ENCODE measurements at regions of chr9 and their contacts with region 1.

Region 1: GRCh38 chr9:93962561-93963440 is 7.6 kb upstream of the BARX1 start:
- DNase-seq: peak; percentile 87 to 90
- ATAC-seq: peak; percentile 90
- H3K4me3 ChIP-seq: no peak overlapping the region
- H3K27ac ChIP-seq: no peak overlapping the region
- H3K4me1 ChIP-seq: no peaks in the 10 kb centered on the region
- H3K27me3 ChIP-seq: no peaks in the 10 kb centered on the region

Region 2: GRCh38 chr9:93682232-93682968 is 280.4 kb before region 1 on chr9:
- intact Hi-C with region 1: loop called (anchors 2 kb)
- DNase-seq: peak; percentile 63 to 86
- ATAC-seq: no peak
- H3K4me3 ChIP-seq: no peak overlapping the region
- H3K27ac ChIP-seq: no peak overlapping the region
- H3K4me1 ChIP-seq: no peaks in the 10 kb centered on the region
- H3K27me3 ChIP-seq: no peaks in the 10 kb centered on the region

Region 3: GRCh38 chr9:93827545-93828330 is 135.1 kb before region 1 on chr9:
- intact Hi-C with region 1: loop called (anchors 5 to 10 kb)
- DNase-seq: peak; percentile 70 to 82
- ATAC-seq: peak; percentile 84
- H3K4me3 ChIP-seq: peak overlapping the region in 1 of 2 donors; percentile 18
- H3K27ac ChIP-seq: no peak overlapping the region
- H3K4me1 ChIP-seq: no peaks in the 10 kb centered on the region
- H3K27me3 ChIP-seq: no peaks in the 10 kb centered on the region

Region 4: GRCh38 chr9:93886911-93887310 is 75.9 kb before region 1 on chr9:
- intact Hi-C with region 1: no loop called
- DNase-seq: no peak
- ATAC-seq: no peak
- H3K4me3 ChIP-seq: no peak overlapping the region
- H3K27ac ChIP-seq: no peak overlapping the region
- H3K4me1 ChIP-seq: no peaks in the 10 kb centered on the region
- H3K27me3 ChIP-seq: no peaks in the 10 kb centered on the region

Region 5: GRCh38 chr9:94603259-94604160 is 640.7 kb after region 1 on chr9:
- intact Hi-C with region 1: no loop called
- DNase-seq: peak; percentile 86 to 89
- ATAC-seq: peak; percentile 84
- H3K4me3 ChIP-seq: no peak overlapping the region
- H3K27ac ChIP-seq: no peak overlapping the region
- H3K4me1 ChIP-seq: no peaks in the 10 kb centered on the region
- H3K27me3 ChIP-seq: no peaks in the 10 kb centered on the region

Measured in aorta (tissue), 5 donors.